BJ (cell line): ENCODE measurements at regions of chr9 and their contacts with region 1.

Region 1: GRCh38 chr9:33374634-33375213 is 27.6 kb downstream of the AQP7 start:
- DNase-seq: peak; percentile 16
- H3K4me3 ChIP-seq: no peak overlapping the region
- H3K27me3 ChIP-seq: no peaks in the 10 kb centered on the region
- CTCF ChIP-seq: peak; percentile 93

Region 2: DNA sequence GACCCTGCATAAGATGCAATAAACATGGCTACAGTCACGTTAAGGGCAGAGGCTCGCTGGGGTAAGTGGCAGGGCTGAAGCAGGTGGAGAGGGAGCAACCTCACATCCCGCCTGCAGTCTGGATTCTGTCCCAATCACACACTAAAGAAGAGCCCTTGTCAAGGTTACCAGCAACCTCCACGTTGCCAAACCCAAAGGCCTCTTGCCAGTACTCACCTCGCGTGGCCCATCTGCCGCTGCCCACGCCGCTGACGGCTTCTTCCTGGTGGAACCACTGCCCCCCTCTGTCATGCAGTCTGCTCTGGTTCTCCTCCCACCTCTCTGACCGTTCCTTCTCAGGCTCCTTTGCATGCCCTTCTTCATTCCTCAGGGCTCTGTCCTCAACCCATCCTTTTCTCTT is 18.9 kb after region 1 on chr9:
- CTCF ChIA-PET with region 1: interaction called, 11 read pairs
- POLR2A ChIA-PET with region 1: no interaction called
- DNase-seq: no peak
- H3K4me3 ChIP-seq: no peak overlapping the region
- H3K27me3 ChIP-seq: no peaks in the 10 kb centered on the region
- CTCF ChIP-seq: no peak

Region 3: DNA sequence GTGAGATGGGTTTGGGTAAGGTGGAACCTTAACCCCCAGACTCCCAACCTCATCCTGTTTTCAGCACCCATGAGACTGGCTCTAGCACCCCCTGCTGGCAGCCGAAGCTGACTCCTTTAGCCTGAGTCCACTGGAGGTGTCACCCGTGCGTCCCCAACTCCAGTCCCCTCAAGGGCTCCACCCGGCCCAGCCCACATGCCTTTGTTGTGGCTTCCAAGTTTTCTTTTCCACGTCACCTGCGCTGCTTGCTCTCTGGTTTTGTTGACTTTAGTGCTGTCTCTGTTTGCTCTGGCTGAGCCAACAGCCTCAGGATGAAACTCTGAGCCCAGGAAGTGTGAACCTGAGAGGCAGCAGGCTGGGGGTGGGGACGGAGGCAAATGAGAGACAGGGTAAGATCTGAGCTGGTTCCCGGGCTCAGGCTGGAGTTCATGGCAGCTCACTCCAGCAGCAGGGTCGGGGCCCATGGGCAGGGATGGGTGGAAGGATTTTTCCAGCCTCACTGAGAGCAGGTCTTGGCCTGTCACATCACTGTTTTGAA is 40.8 kb after region 1 on chr9:
- CTCF ChIA-PET with region 1: interaction called, 111 read pairs
- POLR2A ChIA-PET with region 1: interaction called, 5 read pairs
- DNase-seq: no peak
- H3K4me3 ChIP-seq: no peak overlapping the region
- H3K27me3 ChIP-seq: peaks cover 5% of the 10 kb centered on the region
- CTCF ChIP-seq: peak; percentile 82

Region 4: DNA sequence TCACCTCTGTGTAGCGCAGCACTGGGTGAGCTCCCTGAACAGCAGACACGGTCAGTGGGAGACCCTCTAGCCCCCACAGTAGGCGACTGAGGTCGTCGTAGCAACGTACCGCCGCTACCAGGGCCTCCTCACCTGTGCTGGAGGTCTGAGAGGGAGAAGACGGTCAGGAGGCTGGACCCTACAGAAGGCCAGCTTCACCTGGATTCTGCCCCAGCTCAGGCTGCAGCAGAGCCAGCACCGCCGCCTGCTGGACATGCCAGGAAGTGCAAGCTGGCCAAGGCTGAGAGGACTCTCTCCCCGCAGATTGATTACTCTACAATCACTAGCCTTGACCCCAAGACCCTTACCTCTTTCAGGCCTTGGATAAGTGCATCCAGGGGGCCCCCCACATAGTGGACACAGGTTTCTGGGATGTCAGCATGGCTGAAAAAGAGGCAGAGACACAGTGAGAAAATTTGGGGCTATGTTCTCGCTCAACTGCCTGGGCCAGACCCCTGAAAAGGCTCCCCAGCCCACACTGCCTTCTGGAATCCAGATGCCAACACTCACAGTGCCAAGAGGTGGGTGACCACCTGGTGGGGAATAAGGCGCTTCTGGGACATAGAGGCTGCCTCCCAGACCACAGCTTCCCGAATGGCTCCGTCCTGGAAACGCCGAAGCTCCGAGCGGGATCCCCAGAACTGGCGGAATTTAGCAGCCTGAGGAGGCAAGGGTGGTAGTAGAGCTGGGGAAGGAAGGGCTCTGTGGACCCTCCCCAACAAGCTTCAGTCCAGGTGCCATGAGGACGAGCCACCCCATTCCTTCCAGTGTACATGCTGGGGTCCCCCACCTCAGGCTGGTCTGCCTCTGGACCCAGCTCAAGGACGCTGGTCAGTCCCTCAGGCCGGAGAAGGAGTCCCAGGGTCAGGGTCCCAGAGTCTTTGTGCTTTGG is 92.1 kb after region 1 on chr9:
- CTCF ChIA-PET with region 1: interaction called, 36 read pairs
- POLR2A ChIA-PET with region 1: no interaction called
- DNase-seq: no peak
- H3K4me3 ChIP-seq: no peak overlapping the region
- H3K27me3 ChIP-seq: no peaks in the 10 kb centered on the region
- CTCF ChIP-seq: peak; percentile 99

Region 5: GRCh38 chr9:33721674-33722358 is 347.1 kb after region 1 on chr9:
- CTCF ChIA-PET with region 1: interaction called, 10 read pairs
- POLR2A ChIA-PET with region 1: no interaction called
- DNase-seq: no peak
- H3K4me3 ChIP-seq: no peak overlapping the region
- H3K27me3 ChIP-seq: peaks cover 11% of the 10 kb centered on the region
- CTCF ChIP-seq: peak; percentile 100